ENCODE measurements at regions of chr1 and their contacts with region 1.

Region 1: DNA sequence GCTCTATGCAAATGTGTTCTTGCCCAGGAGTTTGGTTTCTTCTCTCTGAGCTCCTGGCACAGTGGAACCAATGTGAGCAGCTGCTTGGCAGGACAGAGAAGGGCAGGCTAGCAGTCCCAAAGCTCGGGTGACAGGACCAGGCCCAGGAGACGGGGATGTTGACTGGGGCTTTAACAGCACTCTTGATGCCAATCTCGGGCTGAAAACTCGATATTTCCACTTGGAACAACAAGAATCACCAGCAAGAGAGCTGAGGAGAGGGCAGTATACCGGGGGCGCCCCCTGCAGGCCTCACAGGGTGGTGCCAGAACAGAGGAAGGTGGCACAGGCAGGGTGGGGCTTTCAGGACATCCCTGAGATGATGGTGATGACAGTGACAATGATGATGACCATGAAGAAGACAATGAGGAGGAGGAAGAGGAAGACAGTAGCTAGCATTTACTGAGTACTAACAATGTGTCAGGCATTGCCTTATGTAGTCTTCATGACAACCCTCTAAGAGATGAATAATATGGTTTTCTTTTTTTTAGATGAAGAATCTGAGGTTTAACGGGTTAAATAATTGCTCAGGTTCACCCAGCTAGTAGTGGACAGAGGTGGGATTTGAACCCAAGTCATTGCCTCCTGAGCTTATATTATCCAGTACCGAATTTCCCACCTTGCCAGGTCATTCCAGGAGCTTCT is 2.7 kb upstream of the KCNJ9 start:
- DNase-seq: peak; percentile 43 to 72
- ATAC-seq: peak; percentile 72 to 89 (median 86)
- H3K4me3 ChIP-seq: no peak overlapping the region
- H3K4me3 Mint-ChIP-seq: no peak overlapping the region
- H3K27ac ChIP-seq: no peak overlapping the region
- H3K27ac Mint-ChIP-seq: no peak overlapping the region
- H3K4me1 ChIP-seq: no peaks in the 10 kb centered on the region
- H3K4me1 Mint-ChIP-seq: no peaks in the 10 kb centered on the region
- H3K27me3 ChIP-seq: peaks cover 28% of the 10 kb centered on the region
- H3K27me3 Mint-ChIP-seq: peaks cover 44 to 68% of the 10 kb centered on the region in 2 donors
- CTCF ChIP-seq: peak; percentile 74

Region 2: DNA sequence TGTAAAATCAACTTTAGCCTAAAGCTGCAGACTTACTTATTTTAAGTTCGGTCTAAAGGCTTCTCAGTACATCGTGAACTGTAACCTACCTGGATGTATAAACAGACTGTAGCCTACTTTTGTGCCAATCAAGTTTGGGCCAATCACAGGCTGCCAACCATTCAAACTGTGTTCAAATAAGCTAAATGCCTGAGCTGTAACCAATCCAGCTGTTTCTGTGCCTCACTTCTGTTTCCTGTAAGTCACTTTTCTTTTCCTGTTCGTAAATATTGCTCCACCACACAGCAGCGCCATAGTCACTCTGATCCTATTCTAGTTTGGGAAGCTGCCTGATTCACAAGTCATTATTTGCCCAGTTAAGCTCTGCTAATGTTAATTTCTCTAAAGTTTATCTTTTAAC is 87.1 kb before region 1 on chr1:
- intact Hi-C with region 1: no loop called
- DNase-seq: peak in 1 of 2 donors; percentile 22
- ATAC-seq: peak in 1 of 3 donors; percentile 28
- H3K4me3 ChIP-seq: no peak overlapping the region
- H3K4me3 Mint-ChIP-seq: no peak overlapping the region
- H3K27ac ChIP-seq: no peak overlapping the region
- H3K27ac Mint-ChIP-seq: no peak overlapping the region
- H3K4me1 ChIP-seq: no peaks in the 10 kb centered on the region
- H3K4me1 Mint-ChIP-seq: no peaks in the 10 kb centered on the region
- H3K27me3 ChIP-seq: peaks cover 4% of the 10 kb centered on the region
- H3K27me3 Mint-ChIP-seq: peaks cover 25 to 28% of the 10 kb centered on the region in 2 donors
- CTCF ChIP-seq: no peak

Region 3: DNA sequence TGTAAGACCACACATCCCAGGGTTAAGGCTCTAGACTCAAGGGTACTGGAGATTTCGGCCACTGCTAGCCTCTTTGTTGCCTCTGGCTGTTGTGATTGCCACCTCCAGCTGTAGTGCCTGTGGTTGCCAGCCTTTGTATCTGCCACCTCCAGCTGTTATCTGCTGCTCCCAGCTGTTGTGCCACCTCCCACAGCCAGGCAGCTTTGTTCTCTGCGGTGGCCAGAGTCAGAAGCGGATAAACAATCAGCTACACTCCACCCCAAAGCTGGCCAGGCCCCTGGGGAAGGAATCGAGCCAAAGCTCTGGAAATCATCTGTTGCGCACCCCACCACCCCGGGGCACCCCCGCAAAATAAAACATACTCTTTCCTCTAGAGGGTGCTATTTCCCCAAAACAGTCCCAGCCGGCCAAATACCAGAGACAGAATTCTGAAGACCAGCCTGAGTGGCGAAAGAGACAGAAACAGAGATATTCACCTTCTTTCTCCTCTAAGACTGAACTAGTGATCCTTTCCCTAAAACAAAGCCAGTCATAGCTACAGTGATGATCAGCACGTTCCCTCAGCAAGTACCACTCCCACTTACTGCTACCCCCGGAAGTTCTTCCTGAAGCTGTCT is 32.1 kb before region 1 on chr1:
- intact Hi-C with region 1: loop called (anchors 2 kb)
- DNase-seq: peak in 1 of 2 donors; percentile 70
- ATAC-seq: peak; percentile 80 to 86 (median 82)
- H3K4me3 ChIP-seq: no peak overlapping the region
- H3K4me3 Mint-ChIP-seq: peak overlapping the region; percentile 72
- H3K27ac ChIP-seq: no peak overlapping the region
- H3K27ac Mint-ChIP-seq: peak overlapping the region in 1 of 2 donors; percentile 32
- H3K4me1 ChIP-seq: peaks cover 7% of the 10 kb centered on the region
- H3K4me1 Mint-ChIP-seq: peaks cover 11 to 12% of the 10 kb centered on the region in 2 donors
- H3K27me3 ChIP-seq: no peaks in the 10 kb centered on the region
- H3K27me3 Mint-ChIP-seq: peaks cover 3 to 24% of the 10 kb centered on the region in 2 donors
- CTCF ChIP-seq: peak; percentile 67

Region 4: DNA sequence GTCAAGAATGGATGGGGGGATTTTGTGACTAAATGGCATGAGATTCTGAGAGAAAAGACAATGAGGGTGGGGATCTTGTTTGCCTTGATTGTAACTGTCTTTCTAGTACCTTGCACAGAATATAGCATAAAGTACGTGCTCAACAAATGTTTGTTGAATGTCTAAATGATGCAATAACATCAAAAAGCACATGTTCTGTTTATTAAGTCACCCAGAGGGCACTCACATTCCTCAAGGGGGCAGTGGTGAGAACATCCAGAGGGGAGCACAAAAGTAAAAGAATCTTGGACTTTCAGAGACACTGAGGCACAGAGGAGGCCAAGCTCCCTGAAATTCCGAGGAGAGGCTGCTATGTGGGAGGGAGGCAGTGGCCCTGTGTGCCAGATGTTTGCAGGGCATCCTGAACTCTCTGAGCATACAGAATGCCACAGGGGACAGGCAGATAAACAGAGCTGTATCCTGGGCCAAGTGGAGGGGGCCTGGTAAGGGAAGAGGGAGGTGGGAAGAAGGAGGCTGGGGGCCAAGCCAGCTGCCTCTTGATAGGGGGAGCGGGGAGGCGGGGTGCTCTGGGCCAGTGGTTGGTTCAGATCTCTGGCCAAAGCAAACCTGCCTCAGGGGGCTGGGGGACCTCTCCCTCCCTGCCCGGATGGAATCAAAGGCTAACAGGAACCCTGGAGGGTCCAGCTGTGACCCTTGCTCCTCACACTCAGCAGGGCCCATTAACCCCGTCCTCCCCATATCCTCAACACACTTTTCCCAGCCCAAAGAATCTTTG is 30.4 kb after region 1 on chr1:
- intact Hi-C with region 1: no loop called
- DNase-seq: peak in 1 of 2 donors; percentile 67
- ATAC-seq: peak in 2 of 3 donors; percentile 58 to 59
- H3K4me3 ChIP-seq: no peak overlapping the region
- H3K4me3 Mint-ChIP-seq: no peak overlapping the region
- H3K27ac ChIP-seq: no peak overlapping the region
- H3K27ac Mint-ChIP-seq: no peak overlapping the region
- H3K4me1 ChIP-seq: no peaks in the 10 kb centered on the region
- H3K4me1 Mint-ChIP-seq: no peaks in the 10 kb centered on the region
- H3K27me3 ChIP-seq: no peaks in the 10 kb centered on the region
- H3K27me3 Mint-ChIP-seq: peaks cover 6 to 18% of the 10 kb centered on the region in 2 donors
- CTCF ChIP-seq: no peak

Measured in natural killer cell (primary cell).